ENCODE measurements at regions of chr17 and their contacts with region 1.

Region 1: DNA sequence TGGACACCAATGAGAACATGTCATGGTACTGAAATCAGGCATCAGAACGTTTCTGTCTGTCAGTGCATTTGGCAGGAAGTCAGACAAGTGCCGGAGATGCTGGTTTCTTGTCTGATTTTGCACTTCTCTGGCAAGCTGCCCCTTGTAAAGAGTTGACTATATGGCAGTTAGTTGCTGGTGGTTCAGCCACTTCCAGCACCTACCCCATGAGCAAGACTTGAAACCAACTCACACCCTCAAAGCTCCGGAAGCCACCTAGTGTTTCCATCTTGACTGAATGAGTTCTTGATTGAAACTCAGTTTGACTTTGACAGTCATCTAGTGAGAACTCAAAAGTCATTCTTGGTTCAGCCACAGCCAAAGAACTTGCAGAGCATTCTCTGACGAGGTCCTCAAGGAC is 225.1 kb downstream of the SPECC1 start:
- DNase-seq: peak; percentile 91
- H3K4me3 Mint-ChIP-seq: peak overlapping the region; percentile 51
- H3K27ac Mint-ChIP-seq: peak overlapping the region; percentile 79
- H3K4me1 Mint-ChIP-seq: peaks cover 20% of the 10 kb centered on the region
- H3K27me3 Mint-ChIP-seq: no peaks in the 10 kb centered on the region

Region 2: GRCh38 chr17:20059728-20060188 is 174.5 kb before region 1 on chr17:
- intact Hi-C with region 1: no loop called
- DNase-seq: no peak
- H3K4me3 Mint-ChIP-seq: no peak overlapping the region
- H3K27ac Mint-ChIP-seq: no peak overlapping the region
- H3K4me1 Mint-ChIP-seq: peaks cover 7% of the 10 kb centered on the region
- H3K27me3 Mint-ChIP-seq: peaks cover 5% of the 10 kb centered on the region

Region 3: DNA sequence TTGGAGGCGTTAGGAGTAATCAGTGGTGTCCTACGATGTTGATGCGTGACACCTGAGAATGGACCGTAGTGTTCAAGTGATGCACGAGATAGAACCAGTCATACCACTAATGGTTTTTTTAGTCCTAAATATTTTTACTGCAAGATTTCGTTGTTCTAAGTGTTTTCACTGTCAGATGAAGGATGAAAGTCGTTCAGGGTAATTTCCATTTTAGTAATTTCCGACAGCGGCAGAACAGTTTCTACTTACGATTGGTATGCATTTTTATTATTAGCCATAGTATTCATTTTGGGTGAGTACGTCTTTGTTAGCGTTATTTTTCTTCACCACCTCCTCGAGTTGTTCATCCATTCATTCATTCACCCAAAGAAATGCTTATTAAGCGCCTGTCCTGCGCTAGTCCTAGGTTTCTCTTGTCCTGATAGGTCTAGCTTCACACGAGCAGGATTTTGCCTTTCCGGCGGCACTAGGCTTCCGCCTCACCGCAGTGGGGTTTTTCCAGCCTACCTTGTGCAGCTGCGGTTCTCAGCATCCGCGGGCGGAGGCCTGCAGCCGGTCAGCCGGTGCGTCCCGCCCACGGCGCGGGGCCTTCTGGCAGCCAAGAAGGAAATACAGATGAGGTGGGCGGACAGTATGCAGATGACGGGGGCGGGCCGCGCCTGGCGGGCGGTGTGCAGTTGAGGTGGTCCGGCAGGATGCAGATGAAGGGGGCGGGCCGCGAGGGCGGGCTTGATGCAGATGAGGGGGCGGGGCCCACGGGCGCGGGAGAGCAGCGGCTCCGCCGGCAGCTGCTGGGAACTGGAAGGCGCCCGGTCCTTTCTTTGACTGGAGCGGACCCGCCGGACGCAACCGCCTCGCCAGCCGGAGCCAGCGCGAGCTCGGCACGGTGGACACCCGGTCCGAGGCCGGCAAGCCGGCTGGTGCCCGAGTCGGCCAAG is 78.7 kb before region 1 on chr17:
- intact Hi-C with region 1: loop called (anchors 1 kb)
- DNase-seq: peak; percentile 99
- H3K4me3 Mint-ChIP-seq: no peak overlapping the region
- H3K27ac Mint-ChIP-seq: peak overlapping the region; percentile 88
- H3K4me1 Mint-ChIP-seq: peaks cover 8% of the 10 kb centered on the region
- H3K27me3 Mint-ChIP-seq: peaks cover 21% of the 10 kb centered on the region

Region 4: GRCh38 chr17:20281860-20282259 is 47.6 kb after region 1 on chr17:
- intact Hi-C with region 1: loop called (anchors 1 kb)
- DNase-seq: no peak
- H3K4me3 Mint-ChIP-seq: no peak overlapping the region
- H3K27ac Mint-ChIP-seq: peak overlapping the region; percentile 17
- H3K4me1 Mint-ChIP-seq: peaks cover 33% of the 10 kb centered on the region
- H3K27me3 Mint-ChIP-seq: no peaks in the 10 kb centered on the region

Measured in activated CD4-positive, alpha-beta T cell treated with anti-CD3 and anti-CD28 coated beads, Interleukin-2, amount 10 ng/mL, durations not matched to agents 24 days and 14 days (primary cell).